H1 (cell line): ENCODE measurements at regions of chr1 and their contacts with region 1.

Region 1: GRCh38 chr1:31394628-31395193 is 18.3 kb upstream of the SERINC2 start:
- DNase-seq: peak; percentile 79 to 98
- H3K4me3 ChIP-seq: peak overlapping the region in 3 of 4 experiments; percentile 34 to 51 (median 47); a peak in 6 of 8 replicates
- H3K27ac ChIP-seq: no peak overlapping the region
- H3K4me1 ChIP-seq: peaks cover 0 to 4% (median 3%) of the 10 kb centered on the region in 4 experiments; a peak in 4 of 7 replicates
- H3K27me3 ChIP-seq: no peaks in the 10 kb centered on the region
- CTCF ChIP-seq: peak; percentile 85 to 93 (median 92)
- EP300 ChIP-seq: no peak
- POLR2A ChIP-seq: no peak
- RAD21 ChIP-seq: peak; percentile 82 to 86

Region 2: DNA sequence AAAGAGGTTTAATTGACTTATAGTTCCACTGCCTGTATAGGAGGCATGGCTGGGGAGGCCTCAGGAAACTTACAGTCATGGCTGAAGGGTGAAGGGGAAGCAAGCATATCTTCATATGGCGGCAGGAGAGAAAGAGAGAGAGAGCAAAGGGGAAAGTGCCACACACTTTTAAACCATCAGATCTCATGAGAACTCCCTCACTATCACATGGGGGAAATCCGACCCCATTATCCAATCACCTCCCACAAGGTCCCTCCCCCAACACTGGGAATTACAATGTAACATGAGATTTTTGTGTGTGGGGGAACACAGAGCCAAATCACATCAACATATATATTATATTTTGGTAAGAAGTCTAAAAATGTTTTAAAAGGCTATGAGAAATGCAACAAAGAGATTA is 49.1 kb before region 1 on chr1:
- CTCF ChIA-PET with region 1: no interaction called
- POLR2A ChIA-PET with region 1: no interaction called
- DNase-seq: no peak
- H3K4me3 ChIP-seq: no peak overlapping the region
- H3K27ac ChIP-seq: no peak overlapping the region
- H3K4me1 ChIP-seq: no peaks in the 10 kb centered on the region
- H3K27me3 ChIP-seq: no peaks in the 10 kb centered on the region
- CTCF ChIP-seq: no peak
- EP300 ChIP-seq: no peak
- POLR2A ChIP-seq: no peak
- RAD21 ChIP-seq: no peak

Region 3: GRCh38 chr1:31372961-31373896 is 21.5 kb before region 1 on chr1 and contains the start of gene FABP3:
- CTCF ChIA-PET with region 1: interaction called, 32 read pairs
- POLR2A ChIA-PET with region 1: interaction called, 9 read pairs
- DNase-seq: peak; percentile 85 to 91
- H3K4me3 ChIP-seq: peak within 1 kb of the TSS; percentile 33 to 65 (median 58)
- H3K27ac ChIP-seq: peak within 1 kb of the TSS; percentile 72; the same call in 1 of the 2 replicates
- H3K4me1 ChIP-seq: peaks cover 8 to 27% (median 24%) of the 10 kb centered on the region in 4 experiments
- H3K27me3 ChIP-seq: 0 out of 7 replicates have a peak, but pooled peaks cover 0 to 2% (median 0%) of the 10 kb centered on the region in 4 experiments
- CTCF ChIP-seq: no peak
- EP300 ChIP-seq: no peak; a peak in 1 of 3 replicates
- POLR2A ChIP-seq: peak; percentile 74 to 96
- RAD21 ChIP-seq: peak in 1 of 2 experiments; percentile 10; a peak in 1 of 4 replicates
- total RNA-seq, gene FABP3: 31.4 and 34.8 TPM in 2 replicates

Region 4: GRCh38 chr1:31382379-31382989 is 12.2 kb before region 1 on chr1:
- CTCF ChIA-PET with region 1: interaction called, 17 read pairs
- POLR2A ChIA-PET with region 1: interaction called, 9 read pairs
- DNase-seq: no peak
- H3K4me3 ChIP-seq: no peak overlapping the region
- H3K27ac ChIP-seq: no peak overlapping the region
- H3K4me1 ChIP-seq: no peaks in the 10 kb centered on the region; a peak in 2 of 7 replicates
- H3K27me3 ChIP-seq: no peaks in the 10 kb centered on the region
- CTCF ChIP-seq: no peak
- EP300 ChIP-seq: no peak
- POLR2A ChIP-seq: no peak
- RAD21 ChIP-seq: no peak

Region 5: DNA sequence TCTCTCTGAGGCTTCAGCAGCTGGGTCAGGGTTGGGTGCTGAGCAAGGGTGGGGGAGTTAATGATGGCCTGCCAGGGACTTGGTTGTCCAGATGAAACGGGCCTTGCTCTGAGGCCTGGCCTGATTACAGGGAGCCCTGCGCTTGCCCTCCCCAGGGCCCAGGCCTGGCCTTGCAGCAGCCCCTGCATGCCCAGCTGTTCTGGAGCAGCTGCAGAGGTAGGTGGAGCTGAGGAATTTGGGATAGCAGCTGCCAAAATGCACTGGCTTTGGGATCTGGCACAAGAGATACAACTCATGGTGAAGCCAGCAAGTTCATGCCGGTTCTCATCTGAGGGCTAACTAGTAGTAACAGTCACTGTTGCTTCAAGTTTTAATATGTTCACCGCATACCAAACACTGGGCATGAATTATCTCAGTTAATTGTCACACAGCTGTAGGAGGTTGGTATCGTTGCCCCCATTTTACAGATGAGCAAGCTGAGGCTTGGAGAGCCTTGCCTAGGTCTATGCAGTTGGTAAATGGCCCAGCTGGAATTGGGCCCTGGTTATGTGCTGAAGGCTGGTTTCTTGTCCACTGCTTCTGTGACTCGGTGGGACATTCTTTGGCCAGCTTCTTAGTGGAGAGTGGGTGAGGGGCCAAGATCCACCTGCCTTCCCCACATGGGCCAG is 11.0 kb after region 1 on chr1:
- CTCF ChIA-PET with region 1: interaction called, 415 read pairs
- POLR2A ChIA-PET with region 1: no interaction called
- DNase-seq: no peak
- H3K4me3 ChIP-seq: no peak overlapping the region
- H3K27ac ChIP-seq: no peak overlapping the region
- H3K4me1 ChIP-seq: peaks cover 0 to 3% (median 0%) of the 10 kb centered on the region in 4 experiments; a peak in 2 of 7 replicates
- H3K27me3 ChIP-seq: no peaks in the 10 kb centered on the region
- CTCF ChIP-seq: no peak
- EP300 ChIP-seq: no peak
- POLR2A ChIP-seq: no peak
- RAD21 ChIP-seq: no peak

Region 6: DNA sequence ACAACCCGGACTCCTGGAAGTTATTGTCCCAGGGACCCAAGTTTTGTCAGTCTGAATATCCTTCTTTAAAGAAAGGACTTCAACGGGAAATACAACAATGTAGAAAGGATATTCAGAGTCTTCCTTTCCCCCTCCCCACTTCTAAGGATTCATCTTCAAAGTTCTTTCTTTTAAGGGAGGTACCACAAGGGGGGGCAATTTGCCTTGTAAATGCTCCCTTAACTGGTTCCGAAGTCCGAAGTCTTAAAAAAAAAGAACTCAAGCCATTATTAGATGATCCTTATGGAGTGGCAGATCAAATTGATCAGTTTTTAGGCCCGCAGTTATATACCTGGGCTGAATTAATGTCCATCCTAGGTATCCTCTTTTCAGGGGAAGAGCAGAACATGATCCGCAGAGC is 65.3 kb after region 1 on chr1:
- CTCF ChIA-PET with region 1: interaction called, 13 read pairs
- POLR2A ChIA-PET with region 1: no interaction called
- DNase-seq: no peak
- H3K4me3 ChIP-seq: no peak overlapping the region
- H3K27ac ChIP-seq: no peak overlapping the region
- H3K4me1 ChIP-seq: peaks cover 0 to 5% (median 0%) of the 10 kb centered on the region in 4 experiments; a peak in 2 of 7 replicates
- H3K27me3 ChIP-seq: no peaks in the 10 kb centered on the region; a peak in 1 of 7 replicates
- CTCF ChIP-seq: peak in 2 of 3 experiments; percentile 43 to 51; a peak in 2 of 4 replicates
- EP300 ChIP-seq: no peak
- POLR2A ChIP-seq: no peak
- RAD21 ChIP-seq: peak; percentile 66 to 73